ENCODE measurements at regions of chr12 and their contacts with region 1.

Region 1: DNA sequence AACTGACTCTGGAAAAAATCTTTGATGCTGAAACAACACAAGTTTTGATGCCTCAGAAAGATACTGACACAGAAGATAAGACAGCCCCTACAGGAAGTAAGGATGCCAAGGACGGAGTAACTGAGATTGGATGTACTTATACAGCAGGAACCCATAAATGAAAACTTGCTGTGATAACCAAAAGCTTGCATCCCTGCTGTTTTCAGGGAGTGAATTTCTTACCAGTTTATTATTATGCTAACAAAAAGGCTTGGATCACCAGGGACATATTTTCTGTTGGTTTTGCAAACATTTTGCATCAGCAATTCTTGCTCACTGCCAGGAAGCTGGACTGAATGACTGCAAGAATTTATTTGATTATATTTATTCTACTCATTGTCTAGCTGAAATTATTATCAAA is 197.7 kb downstream of the NAV3 start:
- DNase-seq: no peak

Region 2: GRCh38 chr12:77983859-77984258 is 44.6 kb before region 1 on chr12:
- intact Hi-C with region 1: no loop called
- DNase-seq: no peak

Region 3: GRCh38 chr12:77995436-77996167 is 32.8 kb before region 1 on chr12:
- intact Hi-C with region 1: no loop called
- DNase-seq: no peak

Region 4: DNA sequence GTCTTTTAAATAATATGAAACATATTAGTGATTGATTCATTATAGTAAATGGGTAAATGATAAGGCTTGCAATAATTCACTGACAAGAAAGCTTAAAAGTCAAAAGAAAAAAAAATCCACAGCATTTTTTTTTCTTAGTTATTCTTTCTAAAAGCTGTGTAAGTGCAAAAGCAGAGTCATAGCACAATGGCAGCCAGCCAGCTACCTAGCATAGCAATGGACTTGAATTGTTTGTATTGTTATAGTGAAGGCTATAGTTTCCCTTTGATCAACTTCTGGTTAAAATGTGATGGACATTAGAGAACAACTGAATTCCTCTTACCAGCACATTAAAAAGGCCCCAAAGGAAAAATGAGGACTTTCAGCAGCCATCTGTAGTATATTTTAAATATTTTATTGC is 34.4 kb after region 1 on chr12:
- intact Hi-C with region 1: loop called in 1 of 2 experiments (anchors 5 kb)
- DNase-seq: no peak

Region 5: GRCh38 chr12:79407671-79408622 is 1379.5 kb after region 1 on chr12:
- intact Hi-C with region 1: no loop called
- DNase-seq: no peak

Measured in posterior vena cava (tissue), 2 donors.